ENCODE measurements at regions of chr15 and their contacts with region 1.

Region 1: GRCh38 chr15:48352474-48353072 is 21.3 kb downstream of the DUT start:
- DNase-seq: peak; percentile 50
- ATAC-seq: peak; percentile 82
- H3K4me3 Mint-ChIP-seq: no peak overlapping the region
- H3K27ac Mint-ChIP-seq: no peak overlapping the region
- H3K4me1 Mint-ChIP-seq: peaks cover 17% of the 10 kb centered on the region
- H3K27me3 Mint-ChIP-seq: no peaks in the 10 kb centered on the region
- CTCF ChIP-seq: peak; percentile 55

Region 2: GRCh38 chr15:48021336-48022086 is 331.1 kb before region 1 on chr15:
- CTCF ChIA-PET with region 1: no interaction called
- POLR2A ChIA-PET with region 1: no interaction called
- DNase-seq: no peak
- ATAC-seq: no peak
- H3K4me3 Mint-ChIP-seq: no peak overlapping the region
- H3K27ac Mint-ChIP-seq: no peak overlapping the region
- H3K4me1 Mint-ChIP-seq: peaks cover 3% of the 10 kb centered on the region; the same call in 1 of the 2 replicates
- H3K27me3 Mint-ChIP-seq: no peaks in the 10 kb centered on the region
- CTCF ChIP-seq: no peak

Region 3: DNA sequence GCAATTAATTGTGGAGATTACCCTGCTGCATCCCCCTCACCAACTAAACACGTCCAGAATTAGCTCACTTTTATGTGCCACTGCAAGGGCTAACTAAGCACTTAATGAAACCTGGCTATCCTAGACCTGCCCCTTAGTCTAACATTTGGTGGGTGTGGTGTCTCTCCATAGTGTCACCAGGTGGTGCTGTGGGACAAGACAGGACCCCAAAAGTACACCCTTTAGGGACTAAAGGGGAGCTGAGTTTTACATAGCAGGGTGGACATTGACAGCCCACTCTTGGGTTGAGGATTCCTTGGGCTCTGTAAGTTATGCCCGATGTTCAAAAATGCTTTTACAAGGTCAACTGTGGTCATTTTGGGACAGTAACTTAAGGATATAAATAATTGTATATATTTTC is 15.6 kb before region 1 on chr15:
- CTCF ChIA-PET with region 1: interaction called, 38 read pairs
- POLR2A ChIA-PET with region 1: no interaction called
- DNase-seq: peak; percentile 40
- ATAC-seq: peak; percentile 81
- H3K4me3 Mint-ChIP-seq: no peak overlapping the region
- H3K27ac Mint-ChIP-seq: no peak overlapping the region
- H3K4me1 Mint-ChIP-seq: peaks cover 35% of the 10 kb centered on the region
- H3K27me3 Mint-ChIP-seq: no peaks in the 10 kb centered on the region
- CTCF ChIP-seq: peak; percentile 28

Region 4: DNA sequence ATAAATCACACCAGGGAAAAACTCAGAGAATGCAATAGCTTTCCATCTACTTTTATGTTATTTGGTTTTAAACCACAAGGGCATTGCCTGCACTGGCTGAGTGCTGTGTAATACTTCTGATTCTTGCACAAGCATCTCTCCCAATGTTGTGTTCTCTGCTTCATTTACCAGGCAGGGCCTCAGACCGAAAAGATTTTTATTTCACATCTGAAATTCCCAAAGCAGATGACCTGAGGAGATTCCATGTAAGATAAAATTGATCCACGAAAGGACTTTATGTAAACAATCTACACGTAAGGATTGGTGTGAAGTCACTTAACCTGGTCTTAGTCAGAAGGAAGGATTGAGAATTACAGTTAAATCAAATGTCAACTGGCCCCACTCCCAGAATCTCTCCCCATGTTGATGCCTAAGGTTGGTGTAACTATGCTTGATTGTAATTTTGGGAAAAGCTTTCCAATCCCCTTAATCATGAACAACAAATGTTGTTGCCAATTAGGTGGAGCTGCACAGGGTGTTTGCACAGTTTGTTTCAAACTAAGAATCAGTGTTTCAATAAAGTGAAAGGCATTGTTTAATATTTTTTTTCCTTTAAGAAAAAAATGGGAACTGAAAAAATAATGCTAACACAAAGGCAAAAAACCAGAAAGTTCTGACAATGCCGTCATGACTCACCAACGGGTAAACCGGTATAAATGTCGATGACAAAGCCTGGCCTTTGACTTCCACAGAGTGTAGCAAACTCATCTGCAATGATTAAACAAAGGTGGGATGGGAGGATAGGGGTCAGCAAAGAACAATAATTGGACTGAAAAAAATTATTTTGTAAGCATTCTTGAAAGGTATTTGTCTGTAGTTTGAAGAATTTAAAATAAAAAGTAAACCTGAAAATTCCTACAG is 107.2 kb after region 1 on chr15:
- CTCF ChIA-PET with region 1: no interaction called
- POLR2A ChIA-PET with region 1: no interaction called
- DNase-seq: no peak
- ATAC-seq: no peak
- H3K4me3 Mint-ChIP-seq: no peak overlapping the region
- H3K27ac Mint-ChIP-seq: no peak overlapping the region
- H3K4me1 Mint-ChIP-seq: no peaks in the 10 kb centered on the region
- H3K27me3 Mint-ChIP-seq: no peaks in the 10 kb centered on the region
- CTCF ChIP-seq: no peak